HCT116 (cell line): ENCODE measurements at regions of chr1 and their contacts with region 1.

Region 1: DNA sequence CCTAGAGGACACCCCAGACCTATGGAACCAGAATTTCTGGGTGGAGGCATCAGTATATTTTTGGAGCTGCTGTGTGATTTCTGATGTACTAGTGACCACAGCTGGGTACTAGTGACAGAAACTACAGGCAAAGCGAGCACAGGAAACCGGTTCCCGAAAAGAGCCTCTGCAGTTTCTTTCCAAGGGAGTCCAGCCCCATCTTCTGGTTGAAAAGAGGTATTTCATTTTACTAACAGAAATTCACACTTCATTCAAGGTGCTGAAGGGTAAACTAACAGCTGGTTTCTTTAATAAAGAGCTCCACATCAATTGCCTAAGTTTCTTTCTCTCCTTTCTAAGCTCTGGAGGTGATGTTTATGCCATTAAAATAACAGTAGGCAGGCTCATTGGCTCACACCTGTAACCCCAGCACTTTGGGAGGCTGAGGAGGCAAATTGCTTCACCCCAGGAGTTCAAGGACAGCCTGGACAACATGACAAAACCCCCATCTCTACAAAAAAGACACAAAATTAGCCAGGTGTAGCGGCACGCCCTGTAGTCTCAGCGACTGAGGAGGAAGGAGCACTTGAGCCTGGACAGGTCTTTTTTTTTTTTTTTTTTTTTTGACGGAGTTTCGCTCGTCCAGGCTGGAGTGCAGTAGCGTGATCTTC is 22.0 kb downstream of the THAP3 start:
- DNase-seq: peak; percentile 19
- ATAC-seq: peak; percentile 71
- H3K4me3 ChIP-seq: no peak overlapping the region
- H3K27ac ChIP-seq: no peak overlapping the region
- H3K4me1 ChIP-seq: no peaks in the 10 kb centered on the region
- H3K27me3 ChIP-seq: no peaks in the 10 kb centered on the region
- CTCF ChIP-seq: peak; percentile 54 to 60 (median 56); a peak in 4 of 6 replicates
- POLR2A ChIP-seq: no peak
- RAD21 ChIP-seq: peak; percentile 80

Region 2: GRCh38 chr1:6547301-6547700 is 99.3 kb before region 1 on chr1:
- CTCF ChIA-PET with region 1: no interaction called
- POLR2A ChIA-PET with region 1: no interaction called
- RAD21 ChIA-PET with region 1: no interaction called
- intact Hi-C with region 1: loop called (anchors 1 kb)
- DNase-seq: peak; percentile 13
- ATAC-seq: peak; percentile 53; the same call in 1 of the 2 replicates
- H3K4me3 ChIP-seq: no peak overlapping the region
- H3K27ac ChIP-seq: no peak overlapping the region
- H3K4me1 ChIP-seq: no peaks in the 10 kb centered on the region
- H3K27me3 ChIP-seq: no peaks in the 10 kb centered on the region
- CTCF ChIP-seq: peak in 1 of 3 experiments; percentile 21; a peak in 2 of 6 replicates
- POLR2A ChIP-seq: no peak
- RAD21 ChIP-seq: peak; percentile 44

Region 3: GRCh38 chr1:6554031-6554906 is 92.4 kb before region 1 on chr1 and contains the start of gene NOL9:
- CTCF ChIA-PET with region 1: no interaction called
- POLR2A ChIA-PET with region 1: no interaction called
- RAD21 ChIA-PET with region 1: no interaction called
- intact Hi-C with region 1: loop called (anchors 1 kb)
- DNase-seq: peak; percentile 78
- ATAC-seq: peak; percentile 91
- H3K4me3 ChIP-seq: peak within 1 kb of the TSS; percentile 98
- H3K27ac ChIP-seq: peak within 1 kb of the TSS; percentile 96
- H3K4me1 ChIP-seq: peaks cover 9 to 14% of the 10 kb centered on the region in 2 experiments
- H3K27me3 ChIP-seq: no peaks in the 10 kb centered on the region
- CTCF ChIP-seq: peak; percentile 81 to 89 (median 88)
- POLR2A ChIP-seq: peak; percentile 57
- RAD21 ChIP-seq: peak; percentile 58
- total RNA-seq, gene NOL9: 46.4 TPM